PC-3 (cell line): ENCODE measurements at regions of chr10 and their contacts with region 1.

Region 1: GRCh38 chr10:101214446-101215396 is 14.5 kb downstream of the LBX1 start:
- DNase-seq: peak; percentile 73
- ATAC-seq: peak; percentile 67
- H3K4me3 ChIP-seq: peak overlapping the region; percentile 63
- H3K27ac ChIP-seq: no peak overlapping the region
- H3K4me1 ChIP-seq: peaks cover 10% of the 10 kb centered on the region
- H3K27me3 ChIP-seq: peaks cover 63% of the 10 kb centered on the region
- CTCF ChIP-seq: peak; percentile 74

Region 2: DNA sequence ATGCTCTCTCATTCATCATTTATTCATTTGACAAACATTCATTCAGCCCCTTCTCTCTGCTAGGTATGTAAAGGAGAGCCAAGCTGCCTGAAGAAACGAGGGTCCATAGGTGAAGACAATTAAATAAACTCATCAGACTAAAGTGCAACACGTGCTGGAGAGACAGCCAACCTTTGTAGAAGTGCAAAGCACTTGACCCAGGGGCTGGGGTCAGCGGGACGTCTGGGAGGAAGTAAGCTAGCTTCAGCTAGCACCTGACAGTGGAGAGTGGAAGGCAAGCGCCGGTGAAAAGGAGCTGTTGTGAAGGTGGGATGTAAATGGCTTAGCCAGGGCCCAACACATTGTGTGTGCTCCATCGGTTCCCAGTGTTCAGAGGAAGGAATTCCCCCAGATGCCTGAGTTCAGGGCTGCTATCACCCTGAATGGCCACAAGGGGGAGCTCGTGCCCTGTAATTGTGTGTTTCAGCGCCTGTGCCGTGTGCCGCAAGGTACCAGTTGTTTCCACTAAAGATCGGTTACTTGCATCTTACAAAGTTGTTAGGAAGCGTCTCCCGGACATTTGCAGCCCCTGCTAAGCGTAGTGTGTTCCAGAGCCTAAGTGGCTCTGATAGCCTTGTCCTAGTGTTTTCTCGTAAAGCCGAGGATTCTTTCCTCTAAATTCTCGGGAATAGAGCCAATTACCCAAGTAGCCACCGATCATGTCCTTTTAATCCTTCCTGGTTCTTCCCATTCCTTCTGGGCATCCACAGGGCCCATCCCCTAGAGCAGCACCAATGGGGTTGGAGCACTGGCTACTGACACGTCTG is 53.0 kb before region 1 on chr10:
- CTCF ChIA-PET with region 1: interaction called, 7 read pairs
- POLR2A ChIA-PET with region 1: no interaction called
- intact Hi-C with region 1: loop called (anchors 5 kb)
- DNase-seq: peak; percentile 77
- ATAC-seq: peak; percentile 84
- H3K4me3 ChIP-seq: peak overlapping the region; percentile 52; the same call in 1 of the 2 replicates
- H3K27ac ChIP-seq: no peak overlapping the region
- H3K4me1 ChIP-seq: no peaks in the 10 kb centered on the region
- H3K27me3 ChIP-seq: peaks cover 13% of the 10 kb centered on the region; the same call in 1 of the 2 replicates
- CTCF ChIP-seq: peak; percentile 90

Region 3: GRCh38 chr10:101291331-101292193 is 76.8 kb after region 1 on chr10:
- CTCF ChIA-PET with region 1: interaction called, 11 read pairs
- POLR2A ChIA-PET with region 1: no interaction called
- intact Hi-C with region 1: loop called (anchors 5 kb)
- DNase-seq: peak; percentile 19
- ATAC-seq: peak; percentile 59
- H3K4me3 ChIP-seq: peak overlapping the region; percentile 69
- H3K27ac ChIP-seq: no peak overlapping the region
- H3K4me1 ChIP-seq: no peaks in the 10 kb centered on the region
- H3K27me3 ChIP-seq: no peaks in the 10 kb centered on the region
- CTCF ChIP-seq: peak; percentile 52

Region 4: GRCh38 chr10:101441541-101442455 is 227.1 kb after region 1 on chr10:
- CTCF ChIA-PET with region 1: interaction called, 7 read pairs
- POLR2A ChIA-PET with region 1: no interaction called
- intact Hi-C with region 1: loop called (anchors 5 kb)
- DNase-seq: peak; percentile 63
- ATAC-seq: peak; percentile 86
- H3K4me3 ChIP-seq: no peak overlapping the region
- H3K27ac ChIP-seq: no peak overlapping the region
- H3K4me1 ChIP-seq: no peaks in the 10 kb centered on the region
- H3K27me3 ChIP-seq: no peaks in the 10 kb centered on the region
- CTCF ChIP-seq: peak; percentile 67

Region 5: GRCh38 chr10:101569838-101570766 is 355.4 kb after region 1 on chr10:
- CTCF ChIA-PET with region 1: no interaction called
- POLR2A ChIA-PET with region 1: no interaction called
- intact Hi-C with region 1: loop called (anchors 1 kb)
- DNase-seq: peak; percentile 59
- ATAC-seq: peak; percentile 66
- H3K4me3 ChIP-seq: peak overlapping the region; percentile 82
- H3K27ac ChIP-seq: no peak overlapping the region
- H3K4me1 ChIP-seq: peaks cover 11% of the 10 kb centered on the region; the same call in 1 of the 2 replicates
- H3K27me3 ChIP-seq: no peaks in the 10 kb centered on the region
- CTCF ChIP-seq: peak; percentile 57

Region 6: DNA sequence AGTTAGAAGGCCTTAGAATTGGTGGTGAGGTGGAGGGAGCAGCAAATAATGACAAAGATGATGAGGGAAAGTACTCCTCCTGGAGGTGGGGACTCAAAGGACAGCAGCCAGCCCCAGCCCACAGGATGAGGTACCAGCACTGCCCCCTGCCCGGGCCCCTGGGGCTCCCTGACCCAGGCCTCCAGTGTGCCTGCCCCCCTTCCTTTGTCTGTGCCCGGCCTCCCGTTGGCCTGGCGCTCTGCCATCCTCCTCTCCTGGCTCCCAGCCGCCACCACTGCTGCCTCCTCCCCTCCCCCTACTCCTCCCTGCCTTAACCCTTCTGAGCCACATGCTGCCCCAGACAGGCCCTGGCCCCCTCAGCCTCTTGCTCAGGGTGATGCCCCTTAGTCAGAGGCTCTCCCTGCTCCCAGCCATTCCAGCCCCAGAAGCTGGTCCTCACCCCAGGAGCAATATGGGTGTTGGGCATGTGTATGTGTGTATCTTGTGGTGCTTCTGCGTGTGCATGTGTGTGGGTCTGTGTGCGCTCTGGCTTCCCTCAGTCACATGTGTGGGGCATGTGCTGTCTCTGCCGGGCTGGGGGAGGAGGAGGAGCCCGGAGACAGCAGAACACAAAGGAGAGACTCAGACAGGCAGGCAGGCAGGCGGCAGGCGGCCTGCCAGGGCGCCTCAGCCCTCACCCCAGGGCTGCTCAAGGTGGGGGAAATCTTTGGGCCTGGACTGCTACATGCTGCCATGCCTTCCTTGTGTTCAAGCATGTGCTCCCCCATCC is 902.9 kb after region 1 on chr10:
- CTCF ChIA-PET with region 1: no interaction called
- POLR2A ChIA-PET with region 1: interaction called, 34 read pairs
- intact Hi-C with region 1: no loop called
- DNase-seq: no peak
- ATAC-seq: no peak
- H3K4me3 ChIP-seq: 0 out of 2 replicates have a peak overlapping the region, but pooled peaks have one; percentile 12
- H3K27ac ChIP-seq: no peak overlapping the region
- H3K4me1 ChIP-seq: peaks cover 43% of the 10 kb centered on the region
- H3K27me3 ChIP-seq: no peaks in the 10 kb centered on the region
- CTCF ChIP-seq: peak; percentile 34; the same call in 1 of the 2 replicates